Heart left ventricle (tissue), 16 donors: ENCODE measurements at regions of chr3 and their contacts with region 1.

Region 1: GRCh38 chr3:101512646-101513418 is at the start of gene SENP7:
- DNase-seq: peak; percentile 86 to 93 (median 89)
- ATAC-seq: peak; percentile 81 to 90 (median 88)
- H3K4me3 ChIP-seq: peak within 1 kb of the TSS; percentile 73 to 95 (median 86)
- H3K27ac ChIP-seq: peak within 1 kb of the TSS; percentile 79 to 98 (median 95)
- H3K4me1 ChIP-seq: peaks cover 0 to 18% (median 7%) of the 10 kb centered on the region in 12 donors
- H3K27me3 ChIP-seq: peaks cover 0 to 6% (median 0%) of the 10 kb centered on the region in 9 donors
- CTCF ChIP-seq: no peak
- POLR2A ChIP-seq: no peak
- total RNA-seq, gene SENP7: 6.6 to 12.0 (median 8.5) TPM

Region 2: GRCh38 chr3:101561630-101562328 is 48.9 kb after region 1 on chr3 and contains the start of gene TRMT10C:
- intact Hi-C with region 1: loop called in 6 of 10 experiments (anchors 2 to 10 kb)
- DNase-seq: peak; percentile 89 to 94 (median 92)
- ATAC-seq: peak; percentile 96 to 99 (median 99)
- H3K4me3 ChIP-seq: peak within 1 kb of the TSS; percentile 42 to 93 (median 76)
- H3K27ac ChIP-seq: peak within 1 kb of the TSS; percentile 45 to 93 (median 85)
- H3K4me1 ChIP-seq: peaks cover 0 to 29% (median 15%) of the 10 kb centered on the region in 12 donors
- H3K27me3 ChIP-seq: peaks cover 0 to 22% (median 0%) of the 10 kb centered on the region in 9 donors
- CTCF ChIP-seq: no peak
- POLR2A ChIP-seq: peak in 1 of 2 donors; percentile 78
- total RNA-seq, gene TRMT10C: 24.5 to 27.6 (median 26.4) TPM

Region 3: DNA sequence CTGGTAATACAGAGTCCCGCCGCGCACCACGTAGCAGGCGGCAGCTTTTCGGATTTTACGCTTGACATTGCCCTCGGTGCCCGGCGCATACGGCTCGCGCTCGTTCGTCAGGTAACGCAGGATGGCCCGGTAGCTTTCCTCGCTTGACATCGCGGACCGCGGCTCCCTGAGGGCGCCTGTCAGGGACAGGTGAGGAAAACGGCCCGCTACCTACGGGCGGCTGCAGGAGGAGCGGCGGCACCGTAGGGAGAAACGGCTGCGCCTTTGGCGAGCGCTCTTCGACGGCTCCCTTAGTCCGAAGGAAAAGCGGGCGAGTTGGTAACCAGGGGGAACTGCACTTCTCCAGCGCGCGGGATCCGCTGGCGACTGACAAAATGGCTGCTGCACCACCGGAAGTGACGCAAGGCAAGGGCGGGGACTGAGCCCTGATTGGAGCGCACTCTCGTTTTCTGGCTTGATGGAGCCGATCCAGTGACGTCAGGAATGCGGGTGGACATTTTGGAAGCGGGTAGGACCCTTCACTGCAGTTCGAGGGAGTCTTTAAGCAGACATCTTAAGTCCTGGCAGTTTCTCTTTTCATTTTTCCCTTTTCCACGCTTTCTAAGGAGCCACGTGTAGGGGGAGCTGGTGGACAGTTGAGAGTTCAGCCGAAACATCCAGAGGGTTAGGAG is 164.1 kb after region 1 on chr3 and contains the start of gene ZBTB11:
- intact Hi-C with region 1: loop called in 1 of 10 experiments (anchors 5 kb)
- DNase-seq: peak; percentile 100
- ATAC-seq: peak; percentile 91 to 96 (median 94)
- H3K4me3 ChIP-seq: peak within 1 kb of the TSS; percentile 76 to 100 (median 90)
- H3K27ac ChIP-seq: peak within 1 kb of the TSS; percentile 88 to 100 (median 96)
- H3K4me1 ChIP-seq: peaks cover 0 to 39% (median 12%) of the 10 kb centered on the region in 12 donors
- H3K27me3 ChIP-seq: no peaks in the 10 kb centered on the region
- CTCF ChIP-seq: peak; percentile 24 to 79 (median 42)
- POLR2A ChIP-seq: peak; percentile 42 to 73
- total RNA-seq, gene ZBTB11: 8.6 to 12.9 (median 10.4) TPM